Prostate gland (tissue), 2 donors: ENCODE measurements at regions of chr2 and their contacts with region 1.

Region 1: DNA sequence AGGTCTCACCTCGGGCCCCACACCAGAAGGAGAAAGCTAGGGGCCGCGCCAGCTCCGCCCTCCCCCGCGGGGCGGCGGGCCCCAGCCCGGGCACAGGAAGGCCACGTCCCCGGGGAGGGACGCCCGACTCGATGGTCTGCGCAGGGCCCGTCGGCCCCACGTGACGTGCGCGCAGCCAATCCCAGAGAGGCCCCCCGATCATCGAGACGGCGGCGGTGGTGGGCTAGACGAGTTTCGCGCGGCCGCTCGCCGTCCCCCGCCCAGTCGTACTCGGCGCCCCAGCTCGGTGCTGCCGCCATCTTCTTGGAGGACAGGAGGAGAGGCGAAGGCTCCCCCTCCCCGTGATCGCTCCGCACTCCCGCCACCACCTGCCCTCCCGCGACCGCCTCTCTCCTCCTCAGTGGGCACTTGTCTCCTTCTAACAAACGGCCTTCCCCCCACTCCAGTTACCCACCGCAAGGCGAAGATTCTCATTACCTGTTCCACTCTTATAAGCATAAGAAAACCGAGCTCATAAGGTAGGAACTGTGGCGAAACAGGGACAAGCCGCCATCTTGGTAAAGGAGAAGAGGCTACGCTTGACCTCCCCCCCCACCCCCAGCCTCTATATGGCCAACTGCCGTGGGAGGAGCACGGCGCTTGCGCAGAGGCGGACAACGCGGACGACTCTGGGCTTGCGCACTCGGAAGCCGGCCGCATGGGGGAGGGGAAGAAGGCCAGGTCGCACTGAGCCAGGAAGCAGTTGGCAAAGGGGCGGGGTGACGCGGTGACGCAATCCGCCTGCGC is at the start of gene HDLBP:
- DNase-seq: peak; percentile 99
- H3K4me3 ChIP-seq: peak within 1 kb of the TSS; percentile 88 to 92
- H3K27ac ChIP-seq: peak within 1 kb of the TSS; percentile 98
- H3K4me1 ChIP-seq: peaks cover 3% of the 10 kb centered on the region
- H3K27me3 ChIP-seq: no peaks in the 10 kb centered on the region
- CTCF ChIP-seq: peak in 2 of 4 experiments; percentile 18 to 34
- POLR2A ChIP-seq: peak; percentile 90
- total RNA-seq, gene HDLBP: 529 to 612 TPM

Region 2: GRCh38 chr2:241271641-241272297 is 43.5 kb before region 1 on chr2:
- intact Hi-C with region 1: loop called (anchors 2 kb)
- DNase-seq: peak; percentile 88
- H3K4me3 ChIP-seq: peak overlapping the region; percentile 94 to 100
- H3K27ac ChIP-seq: peak overlapping the region; percentile 93 to 99
- H3K4me1 ChIP-seq: peaks cover 9% of the 10 kb centered on the region
- H3K27me3 ChIP-seq: no peaks in the 10 kb centered on the region
- CTCF ChIP-seq: no peak
- POLR2A ChIP-seq: peak; percentile 78

Region 3: DNA sequence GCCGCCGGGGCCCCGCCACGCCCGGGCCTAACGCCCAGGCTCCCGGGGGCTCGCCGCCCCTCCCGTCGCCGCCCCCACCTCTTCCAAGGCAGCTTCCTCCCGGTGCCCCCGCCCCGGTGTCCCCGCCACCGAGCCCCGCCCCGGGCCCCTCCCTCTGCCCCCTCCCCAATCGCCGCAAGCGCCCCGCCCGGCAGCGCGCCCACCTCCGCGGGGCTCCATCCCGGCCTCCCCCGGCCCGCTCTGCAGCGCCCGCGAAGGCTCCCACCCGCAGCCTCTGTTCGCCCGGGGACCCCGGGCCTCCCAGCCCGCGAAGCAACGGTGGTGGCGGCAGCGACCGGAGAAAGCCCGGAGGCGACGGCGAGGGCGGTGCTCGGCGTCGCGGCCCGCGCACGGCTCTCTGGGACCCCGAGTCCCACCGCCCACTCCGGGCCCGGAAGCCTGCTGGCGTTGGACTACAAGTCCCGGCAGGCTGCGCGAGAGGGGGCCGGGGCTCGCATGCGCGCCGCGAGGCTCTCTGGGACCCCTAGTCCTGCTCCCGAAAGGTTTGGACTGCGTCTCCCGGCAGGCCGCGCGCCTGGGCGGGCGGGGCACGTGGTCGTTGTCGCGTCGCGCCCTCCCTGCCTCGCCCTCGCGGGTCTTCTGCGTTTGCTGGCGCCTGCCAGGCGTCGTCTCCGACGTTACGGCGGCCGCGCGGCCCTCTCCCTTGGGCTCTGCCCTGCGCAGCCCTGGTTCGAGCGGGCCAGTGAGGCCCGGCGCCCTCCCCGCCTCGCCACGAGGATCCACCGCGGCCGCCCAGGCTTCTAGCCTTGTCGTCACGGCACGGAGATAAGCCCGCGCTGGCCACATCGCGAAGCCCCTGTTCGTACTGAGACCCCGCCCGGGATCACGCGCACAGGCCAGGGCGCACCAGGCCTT is 193.2 kb after region 1 on chr2 and contains the start of gene STK25:
- intact Hi-C with region 1: loop called (anchors 5 kb)
- DNase-seq: peak; percentile 97
- H3K4me3 ChIP-seq: peak within 1 kb of the TSS; percentile 96
- H3K27ac ChIP-seq: peak within 1 kb of the TSS; percentile 85 to 91
- H3K4me1 ChIP-seq: peaks cover 4% of the 10 kb centered on the region
- H3K27me3 ChIP-seq: no peaks in the 10 kb centered on the region
- CTCF ChIP-seq: peak in 2 of 4 experiments; percentile 3 to 7
- POLR2A ChIP-seq: peak; percentile 78
- total RNA-seq, gene STK25: 169 to 235 TPM

Region 4: DNA sequence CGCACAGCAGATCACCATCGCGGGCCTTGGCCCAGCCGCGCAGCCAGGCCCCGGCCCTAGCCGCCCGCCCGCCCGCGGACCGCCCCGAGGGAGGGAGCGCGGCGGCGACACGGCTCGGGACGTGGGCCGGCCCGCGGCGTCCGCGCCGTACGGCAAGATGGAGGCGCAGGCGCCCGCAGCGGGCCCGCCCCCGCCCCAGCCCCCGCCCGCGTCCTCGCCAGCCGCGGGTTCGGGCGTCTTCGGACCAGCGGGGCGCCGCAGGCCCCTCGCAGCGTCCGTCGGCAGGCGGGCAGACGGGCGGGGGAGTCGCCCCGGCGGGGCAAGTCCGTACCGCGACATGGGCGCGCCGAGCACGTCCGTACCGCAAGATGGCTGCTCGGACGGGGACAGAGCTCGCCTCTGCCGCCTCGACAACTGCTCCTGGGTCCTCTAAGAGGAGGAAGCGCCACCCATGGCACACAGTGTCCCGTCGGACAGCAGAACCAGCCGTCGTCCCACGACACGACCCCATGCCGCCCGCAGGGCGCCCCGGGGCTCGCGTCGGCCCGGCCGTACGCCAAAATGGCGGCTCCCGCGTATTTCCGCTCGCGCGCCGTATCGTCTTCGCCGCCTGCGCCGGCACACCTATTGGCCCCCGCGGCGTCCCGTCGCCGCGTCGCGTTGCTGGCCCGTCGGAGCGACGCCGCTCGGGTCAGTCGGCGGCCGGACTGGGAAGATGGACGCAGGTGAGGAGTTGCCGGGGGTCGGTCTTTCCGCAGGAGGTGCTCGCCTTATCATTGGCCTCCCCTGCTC is 321.9 kb after region 1 on chr2 and contains the starts of genes ATG4B and THAP4:
- intact Hi-C with region 1: loop called (anchors 10 kb)
- DNase-seq: peak; percentile 85
- H3K4me3 ChIP-seq: peak within 1 kb of the TSS; percentile 96 to 100
- H3K27ac ChIP-seq: peak within 1 kb of the TSS; percentile 99
- H3K4me1 ChIP-seq: peaks cover 17% of the 10 kb centered on the region
- H3K27me3 ChIP-seq: no peaks in the 10 kb centered on the region
- CTCF ChIP-seq: peak in 1 of 4 experiments; percentile 25
- POLR2A ChIP-seq: peak; percentile 17
- total RNA-seq, gene ATG4B: 63.9 to 162 TPM
- total RNA-seq, gene THAP4: 60.8 to 92.9 TPM